ENCODE measurements at regions of chr7 and their contacts with region 1.

Region 1: GRCh38 chr7:31857172-31857571 is 170.2 kb downstream of the PPP1R17 start:
- H3K4me3 Mint-ChIP-seq: no peak overlapping the region
- H3K27ac Mint-ChIP-seq: peak overlapping the region; percentile 49
- H3K4me1 Mint-ChIP-seq: peaks cover 20% of the 10 kb centered on the region
- H3K27me3 Mint-ChIP-seq: peaks cover 1% of the 10 kb centered on the region

Region 2: DNA sequence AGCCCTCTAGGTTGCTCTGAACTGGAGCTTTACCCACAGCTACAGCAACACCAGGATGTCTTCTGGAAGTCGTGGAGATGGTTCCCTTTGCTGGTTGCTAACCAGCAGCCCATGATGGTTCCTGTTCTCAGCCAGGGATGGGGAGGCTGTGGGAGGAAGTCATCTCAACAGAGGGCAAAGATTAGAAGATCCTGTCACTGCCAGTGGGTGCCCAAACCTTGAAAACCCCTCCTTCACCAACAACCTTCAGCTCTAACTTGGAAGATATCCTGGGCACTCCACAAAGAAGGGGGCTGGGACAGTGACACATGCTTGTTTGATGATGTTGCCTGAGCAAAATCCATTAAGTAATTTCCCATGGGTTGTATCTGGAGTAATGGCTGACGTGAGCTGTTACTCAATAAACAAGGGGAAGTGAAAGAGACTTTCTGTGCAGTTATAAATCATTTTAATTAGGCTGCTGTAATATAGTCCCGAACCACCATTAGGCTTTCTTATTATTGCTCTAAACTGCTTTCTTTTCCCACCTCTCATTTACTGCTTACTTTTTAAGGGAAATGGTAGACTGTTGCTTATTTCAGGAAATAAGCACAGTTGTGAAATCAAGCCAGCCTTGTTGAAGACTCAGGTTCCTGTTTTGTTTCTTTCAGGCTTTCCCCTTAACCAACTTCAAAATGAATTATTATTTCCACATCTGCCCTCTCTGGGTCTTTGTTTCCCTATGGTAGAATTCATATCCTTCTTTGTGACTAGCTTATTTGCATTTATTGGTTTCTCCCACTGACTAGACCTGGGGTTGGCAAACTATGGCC is 45.3 kb before region 1 on chr7:
- intact Hi-C with region 1: loop called (anchors 5 kb)
- H3K4me3 Mint-ChIP-seq: no peak overlapping the region
- H3K27ac Mint-ChIP-seq: peak overlapping the region; percentile 82
- H3K4me1 Mint-ChIP-seq: peaks cover 27% of the 10 kb centered on the region
- H3K27me3 Mint-ChIP-seq: no peaks in the 10 kb centered on the region